ENCODE measurements at regions of chr18 and their contacts with region 1.

Region 1: GRCh38 chr18:63848159-63848558 is 39.3 kb upstream of the SERPINB2 start:
- DNase-seq: peak; percentile 88
- H3K4me3 ChIP-seq: no peak overlapping the region
- H3K27ac ChIP-seq: peak overlapping the region; percentile 18
- H3K4me1 ChIP-seq: peaks cover 45% of the 10 kb centered on the region
- H3K27me3 ChIP-seq: no peaks in the 10 kb centered on the region
- CTCF ChIP-seq: peak; percentile 76

Region 2: GRCh38 chr18:63016270-63016669 is 831.9 kb before region 1 on chr18:
- CTCF ChIA-PET with region 1: no interaction called
- POLR2A ChIA-PET with region 1: no interaction called
- intact Hi-C with region 1: loop called (anchors 5 kb)
- DNase-seq: peak; percentile 84
- H3K4me3 ChIP-seq: no peak overlapping the region
- H3K27ac ChIP-seq: no peak overlapping the region
- H3K4me1 ChIP-seq: no peaks in the 10 kb centered on the region
- H3K27me3 ChIP-seq: no peaks in the 10 kb centered on the region
- CTCF ChIP-seq: peak; percentile 82

Region 3: GRCh38 chr18:63378919-63379638 is 469.1 kb before region 1 on chr18:
- CTCF ChIA-PET with region 1: no interaction called
- POLR2A ChIA-PET with region 1: no interaction called
- intact Hi-C with region 1: loop called (anchors 2 kb)
- DNase-seq: no peak
- H3K4me3 ChIP-seq: no peak overlapping the region
- H3K27ac ChIP-seq: peak overlapping the region; percentile 95
- H3K4me1 ChIP-seq: peaks cover 31% of the 10 kb centered on the region
- H3K27me3 ChIP-seq: no peaks in the 10 kb centered on the region
- CTCF ChIP-seq: no peak

Region 4: GRCh38 chr18:63578357-63578958 is 269.7 kb before region 1 on chr18:
- CTCF ChIA-PET with region 1: interaction called, 3 read pairs
- POLR2A ChIA-PET with region 1: no interaction called
- intact Hi-C with region 1: loop called (anchors 2 kb)
- DNase-seq: peak; percentile 79
- H3K4me3 ChIP-seq: no peak overlapping the region
- H3K27ac ChIP-seq: no peak overlapping the region
- H3K4me1 ChIP-seq: peaks cover 25% of the 10 kb centered on the region
- H3K27me3 ChIP-seq: no peaks in the 10 kb centered on the region
- CTCF ChIP-seq: peak; percentile 89

Region 5: DNA sequence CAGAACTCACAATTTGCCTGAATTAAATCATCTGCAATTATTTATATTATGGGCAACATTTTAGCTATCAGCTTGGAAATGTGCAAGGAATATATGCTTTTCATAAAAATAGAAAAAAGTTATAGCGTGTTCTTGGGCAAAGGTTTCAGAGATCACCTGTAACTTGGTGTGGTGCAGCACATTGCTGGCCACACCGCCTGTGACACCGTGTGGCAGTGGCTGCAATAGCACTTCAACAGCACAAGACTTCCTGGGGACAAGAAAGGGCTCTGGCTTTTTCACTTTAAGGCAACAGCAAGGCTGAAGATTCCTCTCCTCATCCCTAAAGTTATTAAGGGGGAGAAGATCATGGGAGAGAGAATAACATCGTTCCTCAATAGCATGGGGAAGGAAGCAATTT is 171.6 kb before region 1 on chr18:
- CTCF ChIA-PET with region 1: no interaction called
- POLR2A ChIA-PET with region 1: no interaction called
- intact Hi-C with region 1: loop called (anchors 10 kb)
- DNase-seq: peak; percentile 53
- H3K4me3 ChIP-seq: no peak overlapping the region
- H3K27ac ChIP-seq: no peak overlapping the region
- H3K4me1 ChIP-seq: peaks cover 23% of the 10 kb centered on the region
- H3K27me3 ChIP-seq: no peaks in the 10 kb centered on the region
- CTCF ChIP-seq: peak; percentile 70

Region 6: GRCh38 chr18:63979409-63979920 is 131.3 kb after region 1 on chr18:
- CTCF ChIA-PET with region 1: no interaction called
- POLR2A ChIA-PET with region 1: no interaction called
- intact Hi-C with region 1: loop called (anchors 1 kb)
- DNase-seq: peak; percentile 81
- H3K4me3 ChIP-seq: peak overlapping the region; percentile 9
- H3K27ac ChIP-seq: no peak overlapping the region
- H3K4me1 ChIP-seq: no peaks in the 10 kb centered on the region
- H3K27me3 ChIP-seq: no peaks in the 10 kb centered on the region
- CTCF ChIP-seq: peak; percentile 92

Region 7: GRCh38 chr18:64017870-64018269 is 169.7 kb after region 1 on chr18:
- CTCF ChIA-PET with region 1: no interaction called
- POLR2A ChIA-PET with region 1: no interaction called
- intact Hi-C with region 1: no loop called
- DNase-seq: peak; percentile 63
- H3K4me3 ChIP-seq: no peak overlapping the region
- H3K27ac ChIP-seq: no peak overlapping the region
- H3K4me1 ChIP-seq: no peaks in the 10 kb centered on the region
- H3K27me3 ChIP-seq: no peaks in the 10 kb centered on the region
- CTCF ChIP-seq: peak; percentile 66

Region 8: DNA sequence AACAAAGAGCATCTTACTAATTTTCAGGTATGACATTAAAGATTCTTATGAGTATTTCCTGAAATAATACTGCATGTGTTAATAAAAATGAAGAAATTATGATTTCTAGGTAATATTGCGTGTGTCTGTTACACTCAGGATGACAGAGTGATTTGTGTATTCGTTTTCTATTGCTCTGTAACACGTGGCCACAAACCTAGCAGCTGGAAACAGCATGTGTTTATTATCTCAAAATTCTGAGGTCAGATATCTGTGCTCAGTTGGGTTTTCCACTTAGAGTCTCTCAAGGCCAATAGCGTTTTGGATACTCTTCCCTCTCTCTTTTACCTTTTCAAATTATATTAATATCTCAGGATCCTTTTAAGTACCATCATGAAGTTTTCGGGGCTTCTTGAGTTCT is 1234.7 kb after region 1 on chr18:
- CTCF ChIA-PET with region 1: no interaction called
- POLR2A ChIA-PET with region 1: no interaction called
- intact Hi-C with region 1: no loop called
- DNase-seq: no peak
- H3K4me3 ChIP-seq: no peak overlapping the region
- H3K27ac ChIP-seq: no peak overlapping the region
- H3K4me1 ChIP-seq: no peaks in the 10 kb centered on the region
- H3K27me3 ChIP-seq: no peaks in the 10 kb centered on the region
- CTCF ChIP-seq: no peak

Measured in A673 (cell line).